ENCODE measurements at regions of chr5 and their contacts with region 1.

Region 1: DNA sequence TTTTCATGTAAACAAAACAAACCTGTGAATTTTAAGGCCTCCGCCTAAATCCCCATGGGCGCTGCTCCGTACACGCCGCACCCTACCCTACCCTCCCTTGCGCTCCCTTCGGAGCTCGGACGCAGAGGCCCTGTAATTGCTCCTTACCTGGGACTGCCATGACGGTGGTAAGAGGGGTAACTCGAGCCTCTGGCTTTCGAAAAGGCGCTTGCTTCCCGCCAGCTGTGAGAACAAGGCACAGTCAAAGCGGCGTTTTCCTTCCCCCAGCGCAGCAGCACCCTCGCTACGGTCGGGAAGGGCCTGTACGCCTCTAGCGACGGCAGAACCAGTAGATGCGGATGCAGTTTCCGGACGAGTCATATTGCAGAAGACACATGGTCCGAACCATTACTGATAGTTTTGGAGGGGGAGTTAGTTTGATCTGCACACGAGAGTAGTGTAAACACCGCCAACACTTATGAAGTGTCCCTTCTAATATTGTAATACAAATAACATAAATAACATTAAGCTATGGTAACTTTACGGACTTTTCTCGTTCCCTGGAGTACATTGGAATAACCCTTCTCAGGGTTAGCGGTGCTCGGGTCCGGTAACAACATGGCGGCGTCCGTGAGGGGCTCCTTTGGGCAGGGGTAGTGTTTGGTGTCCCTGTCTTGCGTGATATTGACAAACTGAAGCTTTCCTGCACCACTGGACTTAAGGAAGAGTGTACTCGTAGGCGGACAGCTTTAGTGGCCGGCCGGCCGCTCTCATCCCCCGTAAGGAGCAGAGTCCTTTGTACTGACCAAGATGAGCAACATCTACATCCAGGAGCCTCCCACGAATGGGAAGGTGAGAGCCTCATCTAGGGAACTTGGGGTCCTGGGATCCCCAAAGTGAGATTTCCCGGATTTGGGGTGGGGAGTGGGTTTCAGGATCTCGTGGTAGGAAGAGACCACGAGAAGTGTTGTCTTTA is at the starts of genes CWC27 and SREK1IP1:
- DNase-seq: peak; percentile 90
- H3K4me3 Mint-ChIP-seq: peak within 1 kb of the TSS; percentile 99
- H3K27ac Mint-ChIP-seq: peak within 1 kb of the TSS; percentile 97
- H3K4me1 Mint-ChIP-seq: peaks cover 53% of the 10 kb centered on the region
- H3K27me3 Mint-ChIP-seq: no peaks in the 10 kb centered on the region
- total RNA-seq, gene CWC27: 35.8 to 39.8 TPM
- total RNA-seq, gene SREK1IP1: 16.7 to 17.6 TPM

Region 2: DNA sequence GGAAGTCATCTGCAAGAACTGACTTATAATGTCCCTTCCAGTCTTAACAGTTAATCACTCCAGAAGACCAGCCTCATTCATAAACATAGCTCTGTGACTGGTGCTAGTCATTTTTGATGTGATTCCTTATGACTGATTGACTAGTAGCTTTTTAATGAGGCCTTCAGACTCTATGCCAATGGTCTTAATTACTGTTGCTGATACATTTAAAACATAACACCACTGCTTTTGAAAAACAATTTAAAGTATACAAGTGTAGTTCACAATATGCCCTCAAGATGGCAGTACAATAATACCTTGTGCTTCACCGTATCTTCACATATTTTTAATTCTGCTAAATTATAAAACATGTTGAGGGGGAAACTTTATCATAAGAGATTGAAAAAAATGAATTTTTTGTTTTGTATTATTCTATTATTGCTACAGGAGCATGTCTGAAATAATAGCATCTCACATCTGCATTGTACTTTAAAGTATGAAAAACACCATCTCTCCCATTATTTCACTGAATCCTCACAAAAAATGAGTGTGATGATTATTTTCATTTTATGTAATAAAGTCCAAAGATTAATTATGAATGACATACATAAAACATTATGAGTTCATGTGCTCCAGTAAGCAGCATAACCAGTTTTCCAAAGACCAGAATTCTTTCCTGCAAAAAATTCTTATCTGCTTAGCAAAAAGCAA is 133.5 kb before region 1 on chr5:
- CTCF ChIA-PET with region 1: interaction called, 5 read pairs
- intact Hi-C with region 1: loop called (anchors 5 kb)
- DNase-seq: no peak
- H3K4me3 Mint-ChIP-seq: no peak overlapping the region
- H3K27ac Mint-ChIP-seq: no peak overlapping the region
- H3K4me1 Mint-ChIP-seq: peaks cover 3% of the 10 kb centered on the region
- H3K27me3 Mint-ChIP-seq: peaks cover 13% of the 10 kb centered on the region

Region 3: GRCh38 chr5:64784451-64785025 is 15.9 kb after region 1 on chr5:
- CTCF ChIA-PET with region 1: interaction called, 22 read pairs
- intact Hi-C with region 1: no loop called
- DNase-seq: peak; percentile 89
- H3K4me3 Mint-ChIP-seq: no peak overlapping the region
- H3K27ac Mint-ChIP-seq: no peak overlapping the region
- H3K4me1 Mint-ChIP-seq: peaks cover 4% of the 10 kb centered on the region
- H3K27me3 Mint-ChIP-seq: no peaks in the 10 kb centered on the region

Region 4: GRCh38 chr5:65102828-65103711 is 334.4 kb after region 1 on chr5:
- CTCF ChIA-PET with region 1: no interaction called
- intact Hi-C with region 1: loop called (anchors 1 kb)
- DNase-seq: peak; percentile 39
- H3K4me3 Mint-ChIP-seq: peak overlapping the region; percentile 73
- H3K27ac Mint-ChIP-seq: peak overlapping the region; percentile 33
- H3K4me1 Mint-ChIP-seq: peaks cover 41% of the 10 kb centered on the region
- H3K27me3 Mint-ChIP-seq: peaks cover 2% of the 10 kb centered on the region

Region 5: DNA sequence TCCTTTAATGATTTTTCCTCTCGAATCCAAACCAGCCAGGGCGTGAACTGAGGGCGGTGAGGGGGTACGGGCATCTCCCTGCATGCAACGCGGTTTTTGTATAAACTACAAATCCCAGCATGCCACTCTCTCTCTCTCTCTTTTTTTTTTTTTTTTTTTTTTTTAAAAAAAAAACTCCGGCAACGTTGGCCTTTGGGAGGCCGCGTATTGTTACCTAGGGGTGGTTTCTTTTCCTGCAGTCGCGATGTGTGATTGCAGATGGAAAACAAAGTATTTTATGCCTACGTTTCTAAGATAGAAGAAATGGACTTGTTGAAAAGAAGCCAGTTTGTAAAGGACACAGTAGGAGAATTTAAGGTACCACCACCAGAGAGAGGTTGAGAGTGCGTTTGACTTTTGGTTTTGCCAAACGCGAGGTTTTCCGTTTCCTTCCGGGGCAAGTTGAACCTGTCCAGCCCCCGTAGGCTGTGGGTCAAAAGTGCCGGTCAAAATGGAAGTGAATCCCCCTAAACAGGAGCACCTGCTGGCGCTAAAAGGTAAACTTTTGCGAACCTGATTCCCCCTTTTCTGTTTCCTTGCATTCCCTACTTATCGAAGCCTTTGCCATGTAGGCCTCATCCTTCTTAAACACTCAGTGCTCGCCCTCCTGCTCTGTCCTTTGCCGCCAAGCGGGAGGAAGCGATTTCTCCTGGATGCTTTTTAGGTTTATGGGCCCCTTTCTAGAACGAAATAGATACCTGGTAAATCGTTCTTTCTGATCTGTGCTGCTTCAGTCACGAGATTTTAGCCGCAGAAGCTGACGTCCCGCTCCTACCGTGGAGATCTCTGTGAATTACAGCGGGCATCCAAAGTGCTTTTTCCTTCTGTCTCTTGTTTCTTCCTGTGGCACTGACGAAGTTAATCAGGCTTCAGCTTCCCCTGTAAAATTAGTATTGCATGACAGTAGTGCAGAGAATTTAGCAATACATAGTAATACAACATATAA is 856.2 kb after region 1 on chr5 and contains the starts of genes SHLD3 and TRAPPC13:
- CTCF ChIA-PET with region 1: no interaction called
- intact Hi-C with region 1: loop called (anchors 1 kb)
- DNase-seq: peak; percentile 88
- H3K4me3 Mint-ChIP-seq: peak within 1 kb of the TSS; percentile 99
- H3K27ac Mint-ChIP-seq: peak within 1 kb of the TSS; percentile 94
- H3K4me1 Mint-ChIP-seq: peaks cover 50% of the 10 kb centered on the region
- H3K27me3 Mint-ChIP-seq: no peaks in the 10 kb centered on the region
- total RNA-seq, gene SHLD3: 2.9 to 3.1 TPM
- total RNA-seq, gene TRAPPC13: 25.7 to 29.0 TPM

Measured in activated naive CD4-positive, alpha-beta T cell treated with anti-CD3 and anti-CD28 coated beads for 36 hours (primary cell).